GM10248 (cell line): ENCODE measurements at regions of chr22 and their contacts with region 1.

Region 1: DNA sequence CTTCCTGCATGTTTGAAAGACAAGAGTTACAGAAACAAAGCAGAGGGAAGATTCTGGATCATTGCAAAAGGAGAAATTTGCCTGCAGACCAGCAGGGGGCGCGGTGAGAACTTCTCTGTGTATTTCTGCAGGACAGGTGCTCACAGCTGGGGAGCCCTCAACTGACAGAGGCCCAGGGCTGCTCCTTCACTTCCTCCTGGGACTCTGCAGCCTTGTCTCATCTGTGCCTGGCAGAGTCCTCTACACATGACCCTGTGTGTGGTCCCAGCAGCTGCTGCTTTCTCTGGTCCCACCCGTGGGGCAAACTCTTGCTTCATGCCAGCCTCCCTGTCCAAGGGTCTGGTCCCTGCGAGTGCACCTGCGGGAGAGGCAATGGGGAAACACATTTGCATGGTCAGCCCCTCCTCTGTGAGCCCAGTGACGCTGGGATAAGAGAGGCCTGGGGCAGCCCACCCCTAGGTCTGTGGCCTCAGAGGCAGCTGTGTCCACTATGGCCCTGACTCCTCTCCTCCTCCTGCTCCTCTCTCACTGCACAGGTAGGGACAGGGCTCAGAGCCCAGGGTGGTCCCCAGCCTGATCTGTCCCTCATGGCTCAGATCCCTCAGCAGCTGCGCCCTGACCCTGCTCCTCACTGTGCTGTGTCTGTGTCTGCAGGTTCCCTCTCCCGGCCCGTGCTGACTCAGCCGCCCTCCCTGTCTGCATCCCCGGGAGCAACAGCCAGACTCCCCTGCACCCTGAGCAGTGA is 43.2 kb upstream of the VPREB1 start:
- DNase-seq: peak; percentile 80
- CTCF ChIP-seq: peak; percentile 85

Region 2: GRCh38 chr22:22097727-22098228 is 103.6 kb before region 1 on chr22:
- CTCF ChIA-PET with region 1: no interaction called
- POLR2A ChIA-PET with region 1: no interaction called
- DNase-seq: no peak
- CTCF ChIP-seq: no peak

Region 3: DNA sequence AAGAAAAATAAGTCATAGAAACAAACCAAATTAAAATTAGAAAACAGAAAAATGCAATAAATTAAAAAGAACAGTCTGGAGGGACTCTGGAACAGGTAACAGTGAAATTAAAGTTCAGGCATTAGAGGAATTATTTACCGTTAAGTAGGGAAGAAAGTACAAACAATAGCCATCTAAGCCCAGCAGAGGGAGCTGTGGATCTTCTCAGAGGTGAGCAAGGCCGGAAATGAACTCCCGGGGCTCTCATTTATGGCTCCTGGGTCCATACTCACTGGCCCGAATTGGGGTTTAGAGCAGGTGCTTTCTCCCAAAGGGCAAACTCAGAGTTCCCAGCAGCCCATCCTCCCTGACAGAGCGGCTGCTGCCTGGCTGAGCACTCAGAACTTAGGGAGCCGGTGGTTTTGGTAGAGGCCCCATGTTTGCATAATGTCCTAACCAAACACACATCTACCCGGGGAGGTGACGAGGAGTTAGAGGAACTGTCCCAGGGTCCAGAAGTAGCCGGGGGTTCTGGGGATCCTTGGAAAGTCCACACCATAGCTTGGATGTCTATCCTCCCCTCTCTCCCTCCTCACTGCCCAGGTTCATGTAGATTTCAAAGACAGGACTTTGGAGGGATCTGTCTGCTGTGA is 44.5 kb before region 1 on chr22:
- CTCF ChIA-PET with region 1: interaction called, 55 read pairs
- POLR2A ChIA-PET with region 1: no interaction called
- DNase-seq: peak; percentile 87
- CTCF ChIP-seq: peak; percentile 65

Region 4: DNA sequence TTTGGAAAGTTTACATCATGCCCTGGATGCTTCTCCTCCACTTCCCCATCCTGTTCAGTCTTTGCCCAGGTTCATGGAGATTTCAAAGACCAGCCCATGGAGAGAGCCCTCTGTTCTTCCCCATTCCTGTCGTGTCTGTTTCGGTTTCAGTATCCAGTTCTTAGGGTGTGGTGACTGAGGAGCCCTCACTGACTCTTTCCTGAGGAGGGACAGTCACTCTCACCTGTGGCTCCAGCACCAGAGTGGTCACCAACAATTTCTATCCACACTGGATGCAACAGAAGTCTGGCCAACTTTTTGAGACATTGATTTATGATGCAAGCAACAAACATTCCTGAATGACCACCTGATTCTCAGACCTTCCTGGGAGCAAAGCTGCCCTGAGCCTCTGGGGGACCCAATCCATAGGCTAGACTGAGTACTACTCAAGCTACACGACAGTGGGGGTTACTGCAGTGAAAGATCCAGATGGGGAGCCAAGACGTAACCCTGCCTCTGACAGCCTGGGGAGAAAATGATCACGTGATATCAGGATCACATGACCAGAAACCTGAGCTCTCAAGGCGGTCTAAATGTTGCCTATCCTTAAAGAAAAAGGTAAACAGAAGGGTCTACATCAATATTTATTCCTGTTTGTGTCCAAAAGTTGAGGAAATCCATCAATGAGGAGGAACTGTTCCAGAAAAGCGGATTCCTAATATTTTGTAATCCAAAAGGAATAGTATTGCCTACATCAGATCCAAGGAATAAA is 33.0 kb before region 1 on chr22:
- CTCF ChIA-PET with region 1: interaction called, 55 read pairs
- POLR2A ChIA-PET with region 1: no interaction called
- DNase-seq: peak; percentile 62
- CTCF ChIP-seq: no peak

Region 5: GRCh38 chr22:22215659-22216449 is 14.5 kb after region 1 on chr22:
- CTCF ChIA-PET with region 1: interaction called, 29 read pairs
- POLR2A ChIA-PET with region 1: no interaction called
- DNase-seq: no peak
- CTCF ChIP-seq: no peak

Region 6: DNA sequence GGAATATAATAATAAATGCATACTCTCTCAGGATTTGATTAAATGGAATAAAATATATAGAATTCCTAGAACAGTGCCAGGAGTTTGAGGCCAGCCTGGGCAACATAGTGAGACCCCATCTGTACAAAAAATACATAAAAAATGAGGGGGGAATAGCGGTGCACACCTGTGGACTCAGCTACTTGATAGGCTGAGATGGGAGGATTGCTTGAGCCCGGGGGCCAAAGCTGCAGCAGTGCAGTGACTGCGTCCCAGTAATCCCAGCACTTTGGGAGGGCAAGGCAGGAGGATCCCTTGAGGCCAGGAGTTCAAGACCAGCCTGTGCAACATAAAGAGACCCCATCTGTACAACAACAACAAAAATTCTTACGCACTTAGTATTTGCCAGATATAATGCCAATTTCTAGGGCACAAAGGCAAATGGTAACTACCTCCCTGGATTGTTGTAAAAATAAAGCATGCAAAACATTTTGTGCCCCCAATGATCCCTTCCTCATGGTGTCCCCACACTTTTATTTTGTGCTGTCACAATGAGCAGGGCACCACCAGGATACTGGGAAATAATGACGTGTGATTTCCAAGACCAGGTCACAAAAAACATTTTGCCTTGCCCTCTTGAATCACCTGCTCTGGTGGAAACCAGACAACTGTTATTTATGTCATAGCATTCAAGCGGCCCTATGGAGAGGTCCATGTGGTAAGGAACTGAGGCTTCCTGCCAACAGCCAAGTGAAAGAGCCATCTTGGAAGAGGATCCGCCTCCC is 337.1 kb after region 1 on chr22:
- CTCF ChIA-PET with region 1: no interaction called
- POLR2A ChIA-PET with region 1: no interaction called
- DNase-seq: no peak
- CTCF ChIP-seq: no peak